ENCODE measurements at regions of chr9 and their contacts with region 1.

Region 1: DNA sequence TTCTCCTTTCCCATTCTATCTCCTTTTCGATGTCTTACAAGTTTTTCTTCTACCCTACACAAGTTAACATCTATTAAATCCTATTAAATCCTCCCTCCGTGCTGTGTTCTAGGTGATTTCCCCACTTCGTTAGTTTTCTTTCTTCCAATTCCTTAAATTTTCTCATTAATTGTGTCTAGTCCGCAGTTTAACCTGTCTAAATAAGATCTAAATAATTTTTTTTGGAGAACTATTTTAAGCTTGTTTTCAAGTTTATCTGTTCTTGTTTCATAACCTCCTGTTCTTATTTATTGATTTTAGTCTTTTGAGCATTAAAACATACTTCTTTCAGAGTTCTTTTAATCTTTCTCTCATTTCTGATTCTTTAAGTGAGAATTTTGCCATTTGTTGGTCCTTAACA is 109.3 kb downstream of the UHRF2 start:
- DNase-seq: no peak
- H3K4me3 ChIP-seq: no peak overlapping the region
- H3K27me3 ChIP-seq: no peaks in the 10 kb centered on the region
- CTCF ChIP-seq: no peak

Region 2: DNA sequence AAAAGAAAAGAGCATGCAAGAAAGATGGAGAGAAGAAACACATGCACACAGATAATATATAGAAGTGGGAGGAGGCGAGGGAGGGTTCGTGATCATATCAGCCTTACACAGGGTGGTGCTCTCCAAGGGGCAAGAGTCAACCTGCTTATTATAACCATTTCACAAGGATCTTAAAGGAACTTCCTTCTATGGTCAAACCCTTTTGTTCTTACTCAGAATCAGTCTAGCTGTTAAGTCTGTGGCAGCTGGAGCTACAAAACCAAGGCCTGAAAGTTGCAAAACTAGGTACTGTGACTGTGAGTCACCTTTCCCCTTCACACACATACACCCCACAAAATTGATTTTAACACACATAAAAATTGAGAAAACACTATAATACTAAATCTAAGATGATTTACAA is 670.8 kb before region 1 on chr9:
- CTCF ChIA-PET with region 1: no interaction called
- POLR2A ChIA-PET with region 1: interaction called, 10 read pairs
- DNase-seq: no peak
- H3K4me3 ChIP-seq: no peak overlapping the region
- H3K27me3 ChIP-seq: peaks cover 5% of the 10 kb centered on the region; the same call in 1 of the 2 replicates
- CTCF ChIP-seq: no peak